CD4-positive, alpha-beta memory T cell (primary cell): ENCODE measurements at regions of chr1 and their contacts with region 1.

Region 1: DNA sequence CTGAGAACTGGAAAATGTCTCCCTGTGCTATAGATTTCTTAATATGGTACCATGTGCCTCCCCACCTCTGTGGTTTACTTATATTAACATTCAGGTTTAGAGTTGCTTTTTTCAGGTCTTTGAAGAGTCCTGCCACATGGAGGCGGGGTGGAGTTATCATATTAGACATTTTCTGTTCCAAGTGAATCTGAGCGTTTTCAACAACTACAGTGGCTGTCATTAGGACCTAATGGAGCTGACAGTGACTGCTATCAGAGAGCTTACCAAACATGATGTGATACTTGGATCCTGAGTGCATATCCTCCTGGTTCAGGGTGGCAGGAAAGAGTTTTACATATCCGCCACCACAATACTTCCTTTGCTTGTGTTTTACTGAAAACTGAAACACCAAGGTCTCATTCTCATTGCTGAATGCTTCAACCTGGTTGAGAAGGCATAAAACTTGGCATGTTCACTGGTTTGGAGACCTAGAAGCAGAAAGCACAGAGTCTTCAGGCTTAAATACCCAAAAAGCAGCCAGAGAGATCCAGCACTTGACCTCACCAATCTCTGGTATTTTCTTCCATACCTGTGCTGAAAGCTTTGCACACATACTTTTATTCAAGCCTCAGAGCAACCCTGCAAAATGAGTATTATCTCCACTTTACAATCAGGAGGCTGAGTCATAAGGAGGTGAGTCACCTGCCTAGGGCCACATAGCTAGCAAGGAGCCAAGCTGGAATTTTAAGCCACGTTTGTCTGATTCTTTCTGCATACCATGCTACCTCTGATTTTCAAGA is 47.4 kb upstream of the OSBPL9 start:
- DNase-seq: peak; percentile 38 to 68 (median 45)
- H3K4me3 ChIP-seq: peak overlapping the region in 1 of 2 donors; percentile 33
- H3K4me3 Mint-ChIP-seq: peak overlapping the region; percentile 40 to 81 (median 56)
- H3K27ac ChIP-seq: peak overlapping the region; percentile 27
- H3K27ac Mint-ChIP-seq: peak overlapping the region; percentile 76 to 90 (median 85)
- H3K4me1 ChIP-seq: peaks cover 44% of the 10 kb centered on the region
- H3K4me1 Mint-ChIP-seq: peaks cover 22 to 43% (median 34%) of the 10 kb centered on the region in 4 donors
- H3K27me3 ChIP-seq: no peaks in the 10 kb centered on the region
- H3K27me3 Mint-ChIP-seq: no peaks in the 10 kb centered on the region

Region 2: GRCh38 chr1:51584021-51584420 is 14.5 kb after region 1 on chr1:
- CTCF ChIA-PET with region 1: no interaction called
- POLR2A ChIA-PET with region 1: no interaction called
- intact Hi-C with region 1: no loop called
- DNase-seq: no peak
- H3K4me3 ChIP-seq: no peak overlapping the region
- H3K4me3 Mint-ChIP-seq: no peak overlapping the region
- H3K27ac ChIP-seq: no peak overlapping the region
- H3K27ac Mint-ChIP-seq: no peak overlapping the region
- H3K4me1 ChIP-seq: no peaks in the 10 kb centered on the region
- H3K4me1 Mint-ChIP-seq: no peaks in the 10 kb centered on the region
- H3K27me3 ChIP-seq: no peaks in the 10 kb centered on the region
- H3K27me3 Mint-ChIP-seq: peaks cover 3 to 5% of the 10 kb centered on the region in 2 donors

Region 3: GRCh38 chr1:51616901-51617708 is 47.6 kb after region 1 on chr1 and contains the start of gene OSBPL9:
- CTCF ChIA-PET with region 1: no interaction called
- POLR2A ChIA-PET with region 1: interaction called, 7 read pairs
- intact Hi-C with region 1: loop called (anchors 2 kb)
- DNase-seq: peak; percentile 84 to 91 (median 87)
- H3K4me3 ChIP-seq: peak within 1 kb of the TSS; percentile 76 to 79
- H3K4me3 Mint-ChIP-seq: peak within 1 kb of the TSS; percentile 100
- H3K27ac ChIP-seq: peak within 1 kb of the TSS; percentile 72
- H3K27ac Mint-ChIP-seq: peak within 1 kb of the TSS; percentile 93 to 100 (median 99)
- H3K4me1 ChIP-seq: peaks cover 32% of the 10 kb centered on the region
- H3K4me1 Mint-ChIP-seq: peaks cover 24 to 49% (median 37%) of the 10 kb centered on the region in 4 donors
- H3K27me3 ChIP-seq: no peaks in the 10 kb centered on the region
- H3K27me3 Mint-ChIP-seq: peaks cover under 1 to 1% of the 10 kb centered on the region in 2 donors
- total RNA-seq, gene OSBPL9: 45.1 to 46.9 TPM